ENCODE measurements at regions of chr11 and their contacts with region 1.

Region 1: GRCh38 chr11:74321487-74322188 is 10.2 kb upstream of the P4HA3 start:
- DNase-seq: no peak
- H3K4me3 ChIP-seq: no peak overlapping the region
- H3K27ac ChIP-seq: no peak overlapping the region
- H3K4me1 ChIP-seq: no peaks in the 10 kb centered on the region
- H3K27me3 ChIP-seq: no peaks in the 10 kb centered on the region
- CTCF ChIP-seq: peak in 2 of 4 experiments; percentile 40 to 41
- POLR2A ChIP-seq: no peak

Region 2: GRCh38 chr11:73982969-73983740 is 338.5 kb before region 1 on chr11:
- intact Hi-C with region 1: loop called (anchors 5 kb)
- DNase-seq: peak; percentile 89
- H3K4me3 ChIP-seq: peak overlapping the region; percentile 48 to 50
- H3K27ac ChIP-seq: peak overlapping the region; percentile 75 to 80
- H3K4me1 ChIP-seq: no peaks in the 10 kb centered on the region
- H3K27me3 ChIP-seq: no peaks in the 10 kb centered on the region
- CTCF ChIP-seq: peak in 1 of 4 experiments; percentile 15
- POLR2A ChIP-seq: peak; percentile 45

Region 3: DNA sequence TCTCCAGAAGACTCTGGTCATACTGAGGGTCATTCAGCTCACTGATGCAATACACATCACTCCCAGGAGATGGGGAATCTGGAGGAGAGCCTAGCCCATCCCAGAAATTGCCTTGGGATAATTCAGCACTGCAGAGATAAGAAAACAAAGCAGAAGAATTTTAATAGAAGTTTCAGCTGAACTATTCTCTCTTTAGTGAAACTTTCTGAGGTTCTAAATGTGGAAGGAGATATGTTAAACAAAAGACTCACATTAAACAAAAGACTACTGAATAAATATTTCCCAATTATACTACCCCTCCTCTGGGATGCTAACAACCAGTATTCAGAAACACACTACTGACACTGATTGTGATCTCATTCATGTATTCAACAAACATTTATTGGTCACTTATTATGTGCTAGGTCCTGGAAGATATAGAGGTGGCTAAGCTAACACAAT is 198.6 kb before region 1 on chr11:
- intact Hi-C with region 1: no loop called
- DNase-seq: no peak
- H3K4me3 ChIP-seq: no peak overlapping the region
- H3K27ac ChIP-seq: no peak overlapping the region
- H3K4me1 ChIP-seq: no peaks in the 10 kb centered on the region
- H3K27me3 ChIP-seq: no peaks in the 10 kb centered on the region
- CTCF ChIP-seq: no peak
- POLR2A ChIP-seq: no peak

Region 4: DNA sequence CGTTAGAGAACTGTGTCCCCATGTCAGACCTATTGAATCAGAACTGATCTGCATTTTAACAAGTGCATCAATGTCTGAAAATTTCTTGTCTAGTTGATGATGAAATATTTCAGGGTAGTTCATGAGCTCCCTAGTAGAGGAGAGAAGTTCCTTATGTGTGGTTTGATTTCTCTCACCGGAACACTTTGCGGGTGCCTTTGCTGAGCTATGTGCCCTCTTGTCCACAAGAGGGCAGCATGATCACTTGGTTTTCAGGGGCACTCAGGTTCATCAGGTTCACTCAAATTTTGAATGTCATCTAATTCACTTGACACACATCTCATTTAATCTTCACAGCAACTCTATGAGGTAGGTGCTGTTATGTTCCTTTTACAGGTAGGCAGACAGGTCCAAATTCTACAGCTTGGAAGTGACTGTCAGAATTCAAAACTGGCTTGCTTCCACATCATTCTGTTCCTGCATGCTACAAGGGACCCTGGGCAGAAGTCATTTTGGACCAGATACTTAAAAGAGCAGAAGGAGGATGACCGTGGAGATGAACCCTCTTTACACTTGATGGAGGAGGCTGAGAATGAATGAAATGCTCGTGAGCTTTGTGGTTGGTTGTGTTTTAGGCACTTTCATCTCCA is 65.8 kb before region 1 on chr11:
- intact Hi-C with region 1: loop called (anchors 2 kb)
- DNase-seq: peak; percentile 48
- H3K4me3 ChIP-seq: no peak overlapping the region
- H3K27ac ChIP-seq: no peak overlapping the region
- H3K4me1 ChIP-seq: peaks cover 11% of the 10 kb centered on the region
- H3K27me3 ChIP-seq: no peaks in the 10 kb centered on the region
- CTCF ChIP-seq: peak; percentile 59 to 88 (median 86)
- POLR2A ChIP-seq: no peak

Region 5: DNA sequence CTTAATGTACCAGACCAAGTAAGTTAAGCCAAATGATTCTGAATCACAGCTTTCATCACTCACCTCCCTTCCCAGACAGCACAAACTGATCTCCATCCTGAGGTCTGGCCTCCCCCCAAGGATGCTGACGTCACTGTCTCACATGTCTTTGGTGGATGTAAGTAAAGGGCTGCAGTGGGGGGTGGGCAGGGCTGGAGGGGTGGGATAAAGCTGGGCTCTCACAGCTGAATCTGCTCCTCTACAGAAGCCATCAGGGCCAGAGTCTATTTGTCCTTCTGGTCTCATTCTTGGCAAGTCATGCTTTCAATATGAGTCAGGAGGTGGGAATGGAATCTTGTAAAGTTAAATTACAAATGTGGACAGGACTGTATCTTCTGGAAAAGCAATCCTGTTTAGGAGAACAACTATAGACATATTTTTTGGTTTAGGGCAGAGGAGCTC is 42.9 kb before region 1 on chr11:
- intact Hi-C with region 1: loop called (anchors 5 kb)
- DNase-seq: no peak
- H3K4me3 ChIP-seq: no peak overlapping the region
- H3K27ac ChIP-seq: peak overlapping the region; percentile 22 to 49
- H3K4me1 ChIP-seq: peaks cover 3% of the 10 kb centered on the region
- H3K27me3 ChIP-seq: no peaks in the 10 kb centered on the region
- CTCF ChIP-seq: no peak
- POLR2A ChIP-seq: no peak

Measured in prostate gland (tissue), 2 donors.